Thyroid gland (tissue), 4 donors: ENCODE measurements at regions of chr6 and their contacts with region 1.

Region 1: GRCh38 chr6:27177485-27178406 is 69.8 kb upstream of the PRSS16 start:
- DNase-seq: peak; percentile 86 to 87
- H3K4me3 ChIP-seq: peak overlapping the region; percentile 25 to 84 (median 60)
- H3K27ac ChIP-seq: peak overlapping the region; percentile 79 to 94 (median 88)
- H3K4me1 ChIP-seq: peaks cover 0 to 7% of the 10 kb centered on the region in 2 donors
- H3K27me3 ChIP-seq: no peaks in the 10 kb centered on the region
- CTCF ChIP-seq: peak in 5 of 6 experiments; percentile 13 to 54 (median 45)
- POLR2A ChIP-seq: peak in 1 of 2 donors; percentile 88

Region 2: GRCh38 chr6:27753668-27754407 is 576.1 kb after region 1 on chr6:
- intact Hi-C with region 1: loop called (anchors 5 kb)
- DNase-seq: peak; percentile 53 to 57
- H3K4me3 ChIP-seq: peak overlapping the region in 2 of 3 donors; percentile 16 to 27
- H3K27ac ChIP-seq: no peak overlapping the region
- H3K4me1 ChIP-seq: no peaks in the 10 kb centered on the region
- H3K27me3 ChIP-seq: peaks cover 9% of the 10 kb centered on the region
- CTCF ChIP-seq: no peak
- POLR2A ChIP-seq: no peak

Region 3: DNA sequence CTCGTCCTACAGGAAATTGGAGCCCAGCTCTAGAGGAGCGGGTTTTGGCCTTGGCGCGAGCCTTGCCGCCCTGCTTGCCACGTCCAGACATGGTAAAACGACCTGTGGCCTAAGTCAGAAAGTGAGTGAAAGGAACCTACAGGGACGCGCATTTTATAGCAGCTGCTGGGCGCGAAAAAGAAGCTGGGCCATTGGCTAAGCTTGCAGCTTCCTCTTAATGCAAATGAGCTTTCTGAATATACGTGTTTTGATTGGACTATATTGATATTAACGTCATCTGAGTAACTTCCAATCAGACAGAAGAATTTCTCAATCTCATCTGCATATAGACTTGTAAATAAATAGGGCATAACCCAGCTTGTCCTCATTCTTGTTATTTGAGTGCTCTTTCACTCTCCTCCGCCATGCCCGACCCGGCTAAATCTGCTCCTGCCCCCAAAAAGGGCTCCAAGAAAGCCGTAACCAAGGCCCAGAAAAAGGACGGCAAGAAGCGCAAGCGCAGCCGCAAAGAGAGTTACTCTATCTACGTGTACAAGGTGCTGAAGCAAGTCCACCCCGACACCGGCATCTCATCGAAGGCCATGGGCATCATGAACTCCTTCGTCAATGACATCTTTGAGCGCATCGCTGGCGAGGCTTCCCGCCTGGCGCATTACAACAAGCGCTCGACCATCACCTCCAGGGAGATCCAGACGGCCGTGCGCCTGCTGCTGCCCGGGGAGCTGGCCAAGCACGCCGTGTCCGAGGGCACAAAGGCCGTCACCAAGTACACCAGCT is 715.5 kb after region 1 on chr6:
- intact Hi-C with region 1: loop called (anchors 10 kb)
- DNase-seq: peak; percentile 92
- H3K4me3 ChIP-seq: peak overlapping the region; percentile 5 to 45 (median 28)
- H3K27ac ChIP-seq: peak overlapping the region; percentile 77 to 93 (median 80)
- H3K4me1 ChIP-seq: peaks cover 0 to 13% of the 10 kb centered on the region in 2 donors
- H3K27me3 ChIP-seq: no peaks in the 10 kb centered on the region
- CTCF ChIP-seq: no peak
- POLR2A ChIP-seq: peak; percentile 86 to 97